ENCODE measurements at regions of chr2 and their contacts with region 1.

Region 1: DNA sequence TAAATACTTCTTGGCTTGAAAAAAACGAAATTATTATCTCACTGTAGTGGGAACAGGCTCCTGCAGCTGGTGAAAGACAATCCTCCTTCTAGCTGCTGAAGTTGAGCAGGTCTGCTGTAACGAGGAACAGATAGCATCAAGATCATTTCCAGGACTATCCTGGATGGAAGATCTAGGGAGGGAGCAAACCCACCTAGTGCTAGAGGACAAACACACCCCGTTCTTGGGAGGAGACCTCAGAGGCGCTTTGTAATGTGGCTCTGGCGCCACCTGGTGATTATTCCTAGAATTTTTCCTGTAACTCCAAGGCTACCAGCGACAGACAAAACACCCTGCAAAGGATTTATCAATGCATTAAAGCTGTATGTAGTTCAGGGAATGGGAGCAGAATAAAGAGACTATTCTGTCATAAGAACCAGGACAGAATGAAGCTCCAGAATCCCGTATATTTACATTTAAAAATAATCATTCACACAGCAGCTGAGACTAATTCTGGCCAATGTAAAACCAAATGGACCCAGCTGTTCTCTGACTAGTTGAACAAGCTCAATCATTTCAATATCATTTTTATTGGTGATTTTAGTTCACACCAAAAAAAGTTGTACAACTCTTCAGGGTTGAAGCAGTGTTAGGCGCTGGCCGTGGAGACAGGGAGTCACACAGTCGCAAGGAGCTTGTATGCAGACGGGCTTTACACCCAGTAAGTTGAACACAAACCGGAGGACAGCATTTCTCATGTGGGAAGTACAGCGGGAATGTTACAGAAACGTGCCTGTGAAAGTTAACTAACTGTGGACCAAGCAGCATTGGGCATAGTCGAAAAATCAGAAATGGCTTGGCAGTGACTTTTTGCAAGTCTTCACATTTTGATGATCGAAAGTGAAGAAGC is 290.3 kb downstream of the TRIB2 start:
- DNase-seq: peak; percentile 27 to 44
- ATAC-seq: peak; percentile 55

Region 2: GRCh38 chr2:11863513-11864328 is 1143.4 kb before region 1 on chr2:
- intact Hi-C with region 1: loop called in 1 of 2 experiments (anchors 10 kb)
- DNase-seq: peak; percentile 64 to 71
- ATAC-seq: peak; percentile 72

Region 3: GRCh38 chr2:12330916-12331315 is 676.2 kb before region 1 on chr2:
- intact Hi-C with region 1: no loop called
- DNase-seq: no peak
- ATAC-seq: no peak

Region 4: GRCh38 chr2:12694990-12695774 is 311.9 kb before region 1 on chr2:
- intact Hi-C with region 1: no loop called
- DNase-seq: no peak
- ATAC-seq: no peak

Region 5: DNA sequence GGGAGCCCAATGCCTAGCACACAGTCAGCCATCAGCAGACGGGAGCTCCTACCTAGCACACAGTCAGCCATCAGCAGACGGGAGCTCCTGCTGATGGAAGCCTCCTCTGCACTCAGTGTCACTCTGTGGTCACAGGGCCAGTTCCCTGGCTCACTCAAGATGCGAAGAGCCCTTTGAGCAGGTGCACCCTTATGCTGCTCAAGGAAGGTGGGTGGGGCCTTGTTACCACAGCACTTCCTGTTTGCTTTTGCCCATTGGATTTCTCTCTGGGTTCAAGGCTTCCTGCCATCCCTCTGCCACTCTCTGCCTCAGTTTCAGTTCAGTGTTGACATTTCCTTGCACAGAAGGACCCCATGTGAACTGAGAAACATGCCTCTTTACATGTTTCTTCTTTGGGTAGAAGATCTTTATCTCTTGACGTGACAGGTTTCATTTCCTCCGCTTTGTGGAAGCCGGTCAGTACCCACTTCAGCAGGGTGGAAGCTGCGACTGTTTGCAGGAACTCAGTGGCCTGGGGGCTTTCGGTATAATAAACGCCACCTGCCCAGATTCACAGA is 278.8 kb before region 1 on chr2:
- intact Hi-C with region 1: loop called in 1 of 2 experiments (anchors 10 kb)
- DNase-seq: peak in 1 of 2 donors; percentile 42
- ATAC-seq: peak; percentile 38

Region 6: GRCh38 chr2:12759238-12759641 is 247.8 kb before region 1 on chr2:
- intact Hi-C with region 1: no loop called
- DNase-seq: no peak
- ATAC-seq: no peak